ENCODE measurements at regions of chr15 and their contacts with region 1.

Region 1: GRCh38 chr15:82139823-82140268 is 94.0 kb upstream of the MEX3B start:
- DNase-seq: peak in 1 of 35 experiments; percentile 46
- ATAC-seq: no peak
- H3K4me3 ChIP-seq: no peak overlapping the region
- H3K4me3 Mint-ChIP-seq: no peak overlapping the region
- H3K27ac ChIP-seq: no peak overlapping the region
- H3K27ac Mint-ChIP-seq: no peak overlapping the region
- H3K4me1 ChIP-seq: no peaks in the 10 kb centered on the region
- H3K4me1 Mint-ChIP-seq: peaks cover 7 to 15% (median 9%) of the 10 kb centered on the region in 3 donors
- H3K27me3 ChIP-seq: no peaks in the 10 kb centered on the region
- H3K27me3 Mint-ChIP-seq: no peaks in the 10 kb centered on the region

Region 2: DNA sequence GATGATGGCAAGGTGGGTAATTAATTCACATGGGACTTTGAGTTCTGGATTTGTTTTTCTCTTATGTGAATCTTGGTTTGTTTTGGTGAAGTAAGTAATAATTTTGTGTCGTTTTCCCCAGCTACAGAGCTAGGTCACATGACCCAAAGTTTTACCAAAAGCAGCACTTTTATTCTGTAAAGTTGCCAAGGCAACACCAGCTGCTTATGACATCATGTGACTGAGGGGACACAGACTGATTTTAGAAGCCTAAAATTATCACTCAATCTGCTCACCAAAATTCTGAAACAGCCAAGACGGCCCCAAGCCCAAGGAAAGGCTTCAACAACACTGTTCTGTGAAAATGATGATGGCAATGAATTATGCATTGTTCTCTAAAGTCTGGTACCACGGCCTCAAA is 157.9 kb before region 1 on chr15:
- CTCF ChIA-PET with region 1: no interaction called
- POLR2A ChIA-PET with region 1: no interaction called
- DNase-seq: no peak
- ATAC-seq: no peak
- H3K4me3 ChIP-seq: no peak overlapping the region
- H3K4me3 Mint-ChIP-seq: no peak overlapping the region
- H3K27ac ChIP-seq: no peak overlapping the region
- H3K27ac Mint-ChIP-seq: no peak overlapping the region
- H3K4me1 ChIP-seq: no peaks in the 10 kb centered on the region
- H3K4me1 Mint-ChIP-seq: no peaks in the 10 kb centered on the region
- H3K27me3 ChIP-seq: no peaks in the 10 kb centered on the region
- H3K27me3 Mint-ChIP-seq: peaks cover 7 to 9% of the 10 kb centered on the region in 2 donors

Region 3: GRCh38 chr15:83207622-83208411 is 1068.0 kb after region 1 on chr15 and contains the start of gene HDGFL3:
- CTCF ChIA-PET with region 1: no interaction called
- POLR2A ChIA-PET with region 1: interaction called in 1 of 2 experiments, 11 read pairs
- DNase-seq: peak in 17 of 35 experiments; percentile 2 to 37 (median 11)
- ATAC-seq: peak; percentile 43 to 64 (median 58)
- H3K4me3 ChIP-seq: peak within 1 kb of the TSS; percentile 40 to 68
- H3K4me3 Mint-ChIP-seq: peak within 1 kb of the TSS; percentile 75 to 87 (median 82)
- H3K27ac ChIP-seq: no peak within 1 kb of the TSS
- H3K27ac Mint-ChIP-seq: no peak within 1 kb of the TSS
- H3K4me1 ChIP-seq: peaks cover 2 to 5% of the 10 kb centered on the region in 2 experiments
- H3K4me1 Mint-ChIP-seq: peaks cover 8 to 13% (median 8%) of the 10 kb centered on the region in 3 donors
- H3K27me3 ChIP-seq: peaks cover 0 to 20% of the 10 kb centered on the region in 2 experiments
- H3K27me3 Mint-ChIP-seq: peaks cover 8 to 16% of the 10 kb centered on the region in 2 donors
- total RNA-seq, gene HDGFL3: 3.7 to 13.4 (median 9.9) TPM